ENCODE measurements at regions of chr16 and their contacts with region 1.

Region 1: GRCh38 chr16:1543085-1543896 is 9.8 kb downstream of the TMEM204 start:
- DNase-seq: peak; percentile 91

Region 2: GRCh38 chr16:1610276-1611017 is 67.2 kb after region 1 on chr16:
- intact Hi-C with region 1: loop called (anchors 5 kb)
- DNase-seq: peak; percentile 90

Region 3: GRCh38 chr16:2033057-2033908 is 490.0 kb after region 1 on chr16:
- intact Hi-C with region 1: loop called (anchors 10 kb)
- DNase-seq: no peak

Measured in cardiac septum (tissue), 1 donor.